ENCODE measurements at regions of chr19 and their contacts with region 1.

Region 1: GRCh38 chr19:14347999-14348889 is 33.0 kb upstream of the ADGRE5 start:
- DNase-seq: peak; percentile 84
- ATAC-seq: peak; percentile 63
- H3K4me3 Mint-ChIP-seq: peak overlapping the region; percentile 56
- H3K27ac Mint-ChIP-seq: peak overlapping the region; percentile 80
- H3K4me1 Mint-ChIP-seq: peaks cover 24% of the 10 kb centered on the region
- H3K27me3 Mint-ChIP-seq: no peaks in the 10 kb centered on the region

Region 2: GRCh38 chr19:14218620-14219330 is 129.5 kb before region 1 on chr19:
- CTCF ChIA-PET with region 1: interaction called, 11 read pairs
- POLR2A ChIA-PET with region 1: no interaction called
- intact Hi-C with region 1: no loop called
- DNase-seq: no peak
- ATAC-seq: no peak
- H3K4me3 Mint-ChIP-seq: no peak overlapping the region
- H3K27ac Mint-ChIP-seq: no peak overlapping the region
- H3K4me1 Mint-ChIP-seq: peaks cover 13% of the 10 kb centered on the region
- H3K27me3 Mint-ChIP-seq: no peaks in the 10 kb centered on the region

Region 3: GRCh38 chr19:14337510-14337909 is 10.7 kb before region 1 on chr19:
- CTCF ChIA-PET with region 1: interaction called, 31 read pairs
- POLR2A ChIA-PET with region 1: no interaction called
- intact Hi-C with region 1: no loop called
- DNase-seq: peak; percentile 70
- ATAC-seq: peak; percentile 51
- H3K4me3 Mint-ChIP-seq: no peak overlapping the region
- H3K27ac Mint-ChIP-seq: no peak overlapping the region
- H3K4me1 Mint-ChIP-seq: peaks cover 10% of the 10 kb centered on the region
- H3K27me3 Mint-ChIP-seq: no peaks in the 10 kb centered on the region

Region 4: GRCh38 chr19:14405758-14406644 is 57.8 kb after region 1 on chr19:
- CTCF ChIA-PET with region 1: interaction called, 11 read pairs
- POLR2A ChIA-PET with region 1: no interaction called
- intact Hi-C with region 1: loop called in 1 of 2 experiments (anchors 2 kb)
- DNase-seq: peak; percentile 96
- ATAC-seq: peak; percentile 78
- H3K4me3 Mint-ChIP-seq: peak overlapping the region; percentile 12
- H3K27ac Mint-ChIP-seq: no peak overlapping the region
- H3K4me1 Mint-ChIP-seq: peaks cover 16% of the 10 kb centered on the region
- H3K27me3 Mint-ChIP-seq: no peaks in the 10 kb centered on the region

Region 5: GRCh38 chr19:14571695-14572490 is 223.6 kb after region 1 on chr19 and contains the start of gene NDUFB7:
- CTCF ChIA-PET with region 1: no interaction called
- POLR2A ChIA-PET with region 1: no interaction called
- intact Hi-C with region 1: no loop called
- DNase-seq: peak; percentile 95
- ATAC-seq: peak; percentile 95
- H3K4me3 Mint-ChIP-seq: peak within 1 kb of the TSS; percentile 95
- H3K27ac Mint-ChIP-seq: peak within 1 kb of the TSS; percentile 92
- H3K4me1 Mint-ChIP-seq: peaks cover 36% of the 10 kb centered on the region
- H3K27me3 Mint-ChIP-seq: no peaks in the 10 kb centered on the region
- total RNA-seq, gene NDUFB7: 112 to 121 TPM

Measured in activated CD4-positive, alpha-beta T cell treated with anti-CD3 and anti-CD28 coated beads for 36 hours (primary cell).